ENCODE measurements at regions of chr4 and their contacts with region 1.

Region 1: GRCh38 chr4:21790438-21791029 is 158.0 kb downstream of the KCNIP4 start:
- DNase-seq: no peak
- H3K4me3 ChIP-seq: no peak overlapping the region
- CTCF ChIP-seq: no peak

Region 2: GRCh38 chr4:21569638-21570037 is 220.9 kb before region 1 on chr4:
- CTCF ChIA-PET with region 1: no interaction called
- POLR2A ChIA-PET with region 1: no interaction called
- DNase-seq: no peak
- H3K4me3 ChIP-seq: no peak overlapping the region
- CTCF ChIP-seq: no peak

Region 3: DNA sequence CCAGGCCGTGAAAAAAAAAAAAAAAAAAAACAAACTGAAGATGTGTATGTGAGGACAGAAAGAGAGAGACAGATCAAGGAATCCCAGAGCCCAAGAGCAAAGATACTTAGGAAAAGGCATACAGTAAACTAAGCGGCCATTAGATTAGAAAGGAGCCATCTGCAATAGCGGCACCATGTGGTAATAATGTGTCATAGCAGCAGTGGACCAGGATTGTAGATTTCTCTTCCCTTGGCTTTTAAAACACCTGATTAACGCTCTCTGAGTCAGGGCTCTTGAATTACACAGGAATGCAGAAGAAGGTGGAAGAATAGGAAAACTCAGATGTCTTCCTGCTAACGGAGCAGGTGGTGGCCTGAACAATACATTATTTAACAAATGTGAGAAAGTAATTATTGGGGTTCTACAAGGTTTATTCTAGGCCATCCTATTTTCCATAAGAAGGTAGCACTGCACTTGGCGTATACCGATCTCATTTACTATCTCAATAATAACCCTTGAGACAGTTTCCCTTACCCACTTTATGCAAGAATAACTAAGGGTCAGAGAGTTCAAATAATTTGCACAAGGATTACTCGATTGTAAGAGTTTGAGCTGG is 24.6 kb before region 1 on chr4:
- CTCF ChIA-PET with region 1: interaction called, 13 read pairs
- POLR2A ChIA-PET with region 1: no interaction called
- DNase-seq: no peak
- H3K4me3 ChIP-seq: no peak overlapping the region
- CTCF ChIP-seq: peak; percentile 86

Region 4: GRCh38 chr4:21802406-21802805 is 11.9 kb after region 1 on chr4:
- CTCF ChIA-PET with region 1: interaction called, 45 read pairs
- POLR2A ChIA-PET with region 1: no interaction called
- DNase-seq: no peak
- H3K4me3 ChIP-seq: no peak overlapping the region
- CTCF ChIP-seq: no peak

Region 5: DNA sequence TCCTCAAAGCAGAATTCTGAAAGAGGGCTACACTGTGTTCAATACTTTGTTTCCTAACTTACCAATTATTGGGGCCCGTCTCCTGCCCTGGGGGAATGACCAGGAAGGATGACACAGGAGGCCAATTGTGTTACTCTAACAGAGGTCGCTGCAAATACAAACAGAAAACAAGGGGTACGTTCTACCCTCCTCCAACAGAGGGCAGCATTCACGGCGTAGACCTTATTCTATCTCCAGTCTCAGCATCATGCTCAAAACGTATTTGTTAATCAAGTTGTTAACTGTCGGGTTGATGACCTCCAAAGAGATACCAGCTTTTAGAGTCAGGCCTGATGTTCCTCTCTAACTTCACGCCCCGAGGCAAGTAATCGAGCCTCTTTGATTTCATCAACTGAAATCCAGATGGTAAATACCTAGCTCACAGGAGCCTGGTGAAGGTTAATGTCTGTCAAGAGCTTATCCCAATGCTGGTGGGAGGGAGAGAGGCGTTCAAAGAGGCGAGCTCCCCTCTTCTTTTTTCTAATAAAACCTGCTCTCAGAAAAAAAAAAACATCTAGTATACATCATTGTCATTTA is 339.0 kb after region 1 on chr4:
- CTCF ChIA-PET with region 1: interaction called, 22 read pairs
- POLR2A ChIA-PET with region 1: no interaction called
- DNase-seq: no peak
- H3K4me3 ChIP-seq: no peak overlapping the region
- CTCF ChIP-seq: peak; percentile 64

Region 6: GRCh38 chr4:22369901-22370562 is 579.5 kb after region 1 on chr4:
- CTCF ChIA-PET with region 1: interaction called, 20 read pairs
- POLR2A ChIA-PET with region 1: no interaction called
- DNase-seq: no peak
- H3K4me3 ChIP-seq: no peak overlapping the region
- CTCF ChIP-seq: no peak

Region 7: GRCh38 chr4:22389240-22389870 is 598.8 kb after region 1 on chr4:
- CTCF ChIA-PET with region 1: interaction called, 499 read pairs
- POLR2A ChIA-PET with region 1: interaction called, 5 read pairs
- DNase-seq: peak; percentile 58
- H3K4me3 ChIP-seq: no peak overlapping the region
- CTCF ChIP-seq: peak; percentile 75

Region 8: GRCh38 chr4:22434895-22435294 is 644.4 kb after region 1 on chr4:
- CTCF ChIA-PET with region 1: interaction called, 21 read pairs
- POLR2A ChIA-PET with region 1: no interaction called
- DNase-seq: no peak
- H3K4me3 ChIP-seq: no peak overlapping the region
- CTCF ChIP-seq: peak; percentile 62

Measured in AG04449 (cell line).